Left cardiac atrium (tissue), 4 donors: ENCODE measurements at regions of chr12 and their contacts with region 1.

Region 1: GRCh38 chr12:30847259-30847658 is 79.3 kb upstream of the TSPAN11 start:
- DNase-seq: no peak
- ATAC-seq: peak in 1 of 2 donors; percentile 36

Region 2: GRCh38 chr12:30546121-30546520 is 301.1 kb before region 1 on chr12:
- intact Hi-C with region 1: no loop called
- DNase-seq: no peak
- ATAC-seq: no peak

Region 3: GRCh38 chr12:30764251-30764650 is 83.0 kb before region 1 on chr12:
- intact Hi-C with region 1: no loop called
- DNase-seq: no peak
- ATAC-seq: no peak

Region 4: DNA sequence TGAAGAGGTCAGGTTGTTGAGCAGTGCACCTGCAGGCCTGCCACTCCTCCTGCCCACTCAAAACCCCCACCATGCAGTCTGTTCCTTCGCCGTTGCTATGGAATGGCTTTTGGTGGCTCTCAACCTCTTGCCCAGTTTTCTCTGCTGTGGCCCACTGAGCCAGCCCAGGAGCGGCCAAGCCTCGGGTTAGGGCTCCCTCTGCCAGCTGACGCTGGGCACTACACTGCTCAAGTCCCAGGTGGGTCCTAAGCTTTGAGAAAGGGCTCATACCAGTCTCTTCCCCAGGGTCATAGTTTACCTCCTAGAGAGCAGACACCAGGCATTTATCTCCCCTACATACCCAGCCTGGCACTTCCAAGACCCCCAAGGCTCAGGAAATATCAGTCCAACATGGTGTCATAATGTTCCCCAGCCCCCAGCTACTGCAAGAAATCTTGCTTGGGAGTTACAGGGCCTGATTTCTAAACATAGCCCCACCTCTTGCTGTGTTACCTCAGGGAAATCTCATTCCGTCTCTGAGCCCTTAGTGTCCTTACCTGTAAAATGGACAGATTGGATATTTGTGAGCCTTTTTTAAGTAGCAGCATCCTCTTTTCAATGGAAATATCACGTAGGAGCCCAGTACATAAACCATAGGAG is 138.7 kb after region 1 on chr12:
- intact Hi-C with region 1: loop called (anchors 2 to 5 kb)
- DNase-seq: peak; percentile 62
- ATAC-seq: peak; percentile 57 to 76

Region 5: GRCh38 chr12:31267966-31268365 is 420.7 kb after region 1 on chr12:
- intact Hi-C with region 1: loop called (anchors 5 to 10 kb)
- DNase-seq: no peak
- ATAC-seq: no peak